ENCODE measurements at regions of chr19 and their contacts with region 1.

Region 1: DNA sequence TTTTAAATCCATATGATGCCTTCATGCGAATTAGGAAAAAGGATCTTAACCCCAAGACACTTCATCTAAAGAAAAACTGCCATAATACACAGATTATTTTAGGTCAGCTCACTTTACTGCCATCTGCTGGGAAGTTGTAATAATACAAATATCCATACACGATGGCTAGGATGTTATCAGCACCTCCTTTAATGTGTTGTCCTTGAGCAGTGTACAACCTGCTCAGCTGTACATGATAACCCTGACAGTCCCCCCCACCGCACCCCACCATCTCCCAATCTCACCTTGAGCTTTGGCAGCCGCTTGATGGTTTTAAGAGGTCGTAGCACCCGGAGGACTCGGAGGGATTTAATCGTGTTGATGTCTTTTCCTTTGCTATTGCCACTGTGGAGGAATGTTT is 112.2 kb downstream of the IER2 start:
- DNase-seq: no peak
- ATAC-seq: peak; percentile 55
- H3K4me3 ChIP-seq: no peak overlapping the region
- H3K27ac ChIP-seq: no peak overlapping the region
- H3K4me1 ChIP-seq: peaks cover 24 to 35% of the 10 kb centered on the region in 2 experiments
- H3K27me3 ChIP-seq: no peaks in the 10 kb centered on the region
- CTCF ChIP-seq: peak; percentile 27 to 76 (median 64); a peak in 5 of 6 replicates
- POLR2A ChIP-seq: no peak
- RAD21 ChIP-seq: peak; percentile 79

Region 2: GRCh38 chr19:12933287-12934072 is 329.0 kb before region 1 on chr19 and contains the start of gene FARSA:
- CTCF ChIA-PET with region 1: no interaction called
- POLR2A ChIA-PET with region 1: no interaction called
- RAD21 ChIA-PET with region 1: no interaction called
- intact Hi-C with region 1: no loop called
- DNase-seq: peak; percentile 83
- ATAC-seq: peak; percentile 68
- H3K4me3 ChIP-seq: peak within 1 kb of the TSS; percentile 74 to 99
- H3K27ac ChIP-seq: peak within 1 kb of the TSS; percentile 89
- H3K4me1 ChIP-seq: peaks cover 14 to 35% of the 10 kb centered on the region in 2 experiments
- H3K27me3 ChIP-seq: no peaks in the 10 kb centered on the region
- CTCF ChIP-seq: no peak
- POLR2A ChIP-seq: peak; percentile 84
- RAD21 ChIP-seq: no peak
- total RNA-seq, gene FARSA: 129 TPM

Region 3: DNA sequence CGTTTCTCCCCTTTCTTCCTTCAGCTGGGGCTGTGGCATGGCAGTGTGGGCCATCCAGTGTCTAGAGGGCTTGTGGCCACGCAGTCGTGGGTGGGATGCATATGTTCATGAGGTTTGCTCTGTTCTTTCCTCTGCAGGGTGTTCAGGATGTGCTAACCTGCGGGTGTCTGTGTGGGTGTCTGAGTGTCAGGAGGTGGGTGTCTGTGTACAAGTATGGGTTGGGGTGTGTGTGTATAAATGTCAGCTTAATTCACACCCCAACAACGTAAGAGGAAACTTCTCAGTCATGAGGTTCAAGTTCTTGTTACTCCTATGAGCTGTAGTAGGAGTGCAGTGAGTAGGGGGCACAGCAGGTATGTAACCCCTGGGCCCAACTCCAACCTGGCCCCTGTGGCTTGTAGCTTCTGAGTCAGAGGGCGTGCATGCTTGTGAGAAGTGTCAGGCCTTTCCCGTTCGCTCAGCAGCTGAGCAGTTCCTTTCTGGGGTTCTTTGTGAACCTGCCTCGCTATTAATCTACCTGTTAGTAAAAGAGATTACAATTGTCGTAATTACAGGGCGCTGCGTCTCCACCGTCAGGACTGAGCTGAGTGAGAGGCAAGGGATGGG is 218.1 kb before region 1 on chr19:
- CTCF ChIA-PET with region 1: no interaction called
- POLR2A ChIA-PET with region 1: no interaction called
- RAD21 ChIA-PET with region 1: no interaction called
- intact Hi-C with region 1: no loop called
- DNase-seq: no peak
- ATAC-seq: peak; percentile 40; the same call in 1 of the 2 replicates
- H3K4me3 ChIP-seq: no peak overlapping the region
- H3K27ac ChIP-seq: no peak overlapping the region
- H3K4me1 ChIP-seq: peaks cover 2 to 17% of the 10 kb centered on the region in 2 experiments; a peak in 3 of 4 replicates
- H3K27me3 ChIP-seq: no peaks in the 10 kb centered on the region
- CTCF ChIP-seq: no peak
- POLR2A ChIP-seq: no peak
- RAD21 ChIP-seq: no peak

Region 4: GRCh38 chr19:13100841-13101589 is 161.4 kb before region 1 on chr19:
- CTCF ChIA-PET with region 1: interaction called, 13 read pairs
- POLR2A ChIA-PET with region 1: no interaction called
- RAD21 ChIA-PET with region 1: interaction called in 1 of 2 experiments, 3 read pairs
- intact Hi-C with region 1: loop called (anchors 1 kb)
- DNase-seq: no peak
- ATAC-seq: peak; percentile 36
- H3K4me3 ChIP-seq: no peak overlapping the region
- H3K27ac ChIP-seq: no peak overlapping the region
- H3K4me1 ChIP-seq: peaks cover 3 to 42% of the 10 kb centered on the region in 2 experiments; a peak in 3 of 4 replicates
- H3K27me3 ChIP-seq: no peaks in the 10 kb centered on the region
- CTCF ChIP-seq: peak; percentile 63 to 80 (median 63)
- POLR2A ChIP-seq: no peak
- RAD21 ChIP-seq: peak; percentile 85

Region 5: GRCh38 chr19:13117772-13118423 is 144.6 kb before region 1 on chr19 and contains the start of gene NACC1:
- CTCF ChIA-PET with region 1: interaction called, 3 read pairs
- POLR2A ChIA-PET with region 1: no interaction called
- RAD21 ChIA-PET with region 1: no interaction called
- intact Hi-C with region 1: loop called (anchors 5 kb)
- DNase-seq: peak; percentile 89
- ATAC-seq: peak; percentile 87
- H3K4me3 ChIP-seq: peak within 1 kb of the TSS; percentile 97 to 98
- H3K27ac ChIP-seq: peak within 1 kb of the TSS; percentile 100
- H3K4me1 ChIP-seq: peaks cover 21 to 43% of the 10 kb centered on the region in 2 experiments; a peak in 3 of 4 replicates
- H3K27me3 ChIP-seq: no peaks in the 10 kb centered on the region
- CTCF ChIP-seq: no peak
- POLR2A ChIP-seq: no peak
- RAD21 ChIP-seq: no peak
- total RNA-seq, gene NACC1: 181 TPM

Region 6: DNA sequence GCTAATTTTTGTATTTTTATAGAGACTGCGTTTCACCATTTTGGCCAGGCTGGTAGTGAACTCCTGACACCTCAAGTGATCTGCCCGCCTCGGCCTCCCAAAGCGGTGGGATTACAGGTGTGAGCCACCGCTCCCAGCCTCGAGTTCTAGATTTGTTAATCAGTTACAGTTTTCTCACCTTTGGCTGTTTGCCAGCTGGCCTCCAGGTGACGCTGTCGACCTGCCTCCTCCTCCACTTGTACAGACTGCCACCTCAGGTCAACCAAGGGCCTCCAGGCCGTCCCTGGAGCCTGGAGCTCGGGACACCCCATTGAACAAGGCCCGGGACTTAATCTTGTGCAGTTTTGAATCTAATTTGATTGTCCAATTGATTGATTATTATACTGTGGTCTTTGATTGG is 66.8 kb before region 1 on chr19:
- CTCF ChIA-PET with region 1: interaction called, 9 read pairs
- POLR2A ChIA-PET with region 1: no interaction called
- RAD21 ChIA-PET with region 1: no interaction called
- intact Hi-C with region 1: loop called (anchors 1 kb)
- DNase-seq: no peak
- ATAC-seq: peak; percentile 70
- H3K4me3 ChIP-seq: no peak overlapping the region
- H3K27ac ChIP-seq: peak overlapping the region; percentile 36
- H3K4me1 ChIP-seq: peaks cover 28 to 38% of the 10 kb centered on the region in 2 experiments
- H3K27me3 ChIP-seq: no peaks in the 10 kb centered on the region
- CTCF ChIP-seq: peak; percentile 30 to 64 (median 46); a peak in 4 of 6 replicates
- POLR2A ChIP-seq: no peak
- RAD21 ChIP-seq: peak; percentile 60; the same call in 1 of the 2 replicates

Region 7: GRCh38 chr19:13284929-13285928 is 22.8 kb after region 1 on chr19:
- CTCF ChIA-PET with region 1: no interaction called
- POLR2A ChIA-PET with region 1: no interaction called
- RAD21 ChIA-PET with region 1: no interaction called
- intact Hi-C with region 1: no loop called
- DNase-seq: no peak
- ATAC-seq: no peak
- H3K4me3 ChIP-seq: no peak overlapping the region
- H3K27ac ChIP-seq: no peak overlapping the region
- H3K4me1 ChIP-seq: peaks cover 4 to 12% of the 10 kb centered on the region in 2 experiments; a peak in 2 of 4 replicates
- H3K27me3 ChIP-seq: no peaks in the 10 kb centered on the region
- CTCF ChIP-seq: no peak
- POLR2A ChIP-seq: no peak
- RAD21 ChIP-seq: no peak

Measured in HCT116 (cell line).